ENCODE measurements at regions of chr4 and their contacts with region 1.

Region 1: GRCh38 chr4:25144870-25145481 is 15.3 kb downstream of the SEPSECS start:
- DNase-seq: no peak
- H3K4me3 ChIP-seq: no peak overlapping the region
- CTCF ChIP-seq: peak; percentile 33

Region 2: GRCh38 chr4:24488399-24489164 is 656.4 kb before region 1 on chr4:
- CTCF ChIA-PET with region 1: interaction called, 14 read pairs
- POLR2A ChIA-PET with region 1: no interaction called
- DNase-seq: no peak
- H3K4me3 ChIP-seq: no peak overlapping the region
- CTCF ChIP-seq: peak; percentile 86

Region 3: DNA sequence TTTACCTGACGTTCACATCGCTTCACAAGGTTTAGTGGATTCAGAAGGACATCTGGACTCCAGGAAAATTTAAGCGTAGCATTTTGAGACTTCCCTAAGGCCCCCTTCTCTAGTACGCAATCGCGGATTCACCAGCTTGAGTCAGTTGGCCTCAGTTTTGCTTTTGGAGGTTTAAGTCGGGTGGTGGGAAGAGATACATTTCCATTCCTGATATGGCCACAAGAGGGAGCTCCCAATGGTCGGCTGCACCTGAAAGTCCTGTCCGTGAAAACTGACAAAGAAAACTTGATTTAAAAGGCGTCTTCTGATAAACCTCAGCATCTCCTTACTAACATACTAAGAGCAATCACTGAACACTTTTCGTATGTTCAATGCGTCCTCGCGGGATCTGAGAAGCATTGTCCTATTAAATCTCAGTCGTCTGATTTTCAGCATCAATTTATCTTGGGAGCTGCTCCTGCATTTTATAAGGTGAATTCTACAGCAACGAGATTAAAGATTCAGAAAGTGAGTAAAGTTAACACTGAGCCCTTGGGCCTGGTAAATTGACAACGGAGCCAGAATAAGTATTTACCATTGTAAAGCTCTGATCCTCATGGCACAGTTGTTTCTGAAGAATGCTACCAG is 164.8 kb before region 1 on chr4:
- CTCF ChIA-PET with region 1: interaction called, 28 read pairs
- POLR2A ChIA-PET with region 1: no interaction called
- DNase-seq: peak; percentile 24
- H3K4me3 ChIP-seq: peak overlapping the region; percentile 35
- CTCF ChIP-seq: peak; percentile 70

Region 4: DNA sequence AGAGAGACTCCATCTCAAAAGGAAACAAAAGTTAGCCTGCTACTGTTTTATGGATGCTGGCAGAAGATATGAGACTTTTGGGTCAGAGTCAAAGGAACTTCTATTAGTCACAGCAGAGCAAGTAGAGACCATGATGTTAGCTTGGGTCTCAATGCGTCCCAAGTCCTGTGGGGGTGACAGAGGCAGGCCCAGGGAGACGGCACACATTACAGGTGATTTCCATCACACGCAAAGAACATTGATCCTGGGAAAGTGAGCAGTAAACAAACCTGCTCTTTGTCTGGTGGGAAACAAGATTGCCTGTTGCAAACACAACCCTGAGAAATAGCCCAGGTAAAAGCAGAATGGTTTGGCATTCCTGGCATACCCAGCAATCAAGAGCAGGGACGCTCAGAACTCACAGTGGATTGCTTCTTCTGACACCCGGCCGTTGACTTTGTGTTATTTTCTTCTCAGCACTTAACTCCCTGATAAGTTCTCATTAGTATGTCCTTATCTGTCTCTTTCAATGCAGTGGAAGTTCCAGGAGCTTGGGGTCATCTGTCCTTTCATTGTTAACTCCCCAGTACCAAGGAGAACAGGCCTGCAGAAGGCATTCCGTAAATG is 63.0 kb before region 1 on chr4:
- CTCF ChIA-PET with region 1: no interaction called
- POLR2A ChIA-PET with region 1: no interaction called
- DNase-seq: no peak
- H3K4me3 ChIP-seq: no peak overlapping the region
- CTCF ChIP-seq: no peak

Region 5: DNA sequence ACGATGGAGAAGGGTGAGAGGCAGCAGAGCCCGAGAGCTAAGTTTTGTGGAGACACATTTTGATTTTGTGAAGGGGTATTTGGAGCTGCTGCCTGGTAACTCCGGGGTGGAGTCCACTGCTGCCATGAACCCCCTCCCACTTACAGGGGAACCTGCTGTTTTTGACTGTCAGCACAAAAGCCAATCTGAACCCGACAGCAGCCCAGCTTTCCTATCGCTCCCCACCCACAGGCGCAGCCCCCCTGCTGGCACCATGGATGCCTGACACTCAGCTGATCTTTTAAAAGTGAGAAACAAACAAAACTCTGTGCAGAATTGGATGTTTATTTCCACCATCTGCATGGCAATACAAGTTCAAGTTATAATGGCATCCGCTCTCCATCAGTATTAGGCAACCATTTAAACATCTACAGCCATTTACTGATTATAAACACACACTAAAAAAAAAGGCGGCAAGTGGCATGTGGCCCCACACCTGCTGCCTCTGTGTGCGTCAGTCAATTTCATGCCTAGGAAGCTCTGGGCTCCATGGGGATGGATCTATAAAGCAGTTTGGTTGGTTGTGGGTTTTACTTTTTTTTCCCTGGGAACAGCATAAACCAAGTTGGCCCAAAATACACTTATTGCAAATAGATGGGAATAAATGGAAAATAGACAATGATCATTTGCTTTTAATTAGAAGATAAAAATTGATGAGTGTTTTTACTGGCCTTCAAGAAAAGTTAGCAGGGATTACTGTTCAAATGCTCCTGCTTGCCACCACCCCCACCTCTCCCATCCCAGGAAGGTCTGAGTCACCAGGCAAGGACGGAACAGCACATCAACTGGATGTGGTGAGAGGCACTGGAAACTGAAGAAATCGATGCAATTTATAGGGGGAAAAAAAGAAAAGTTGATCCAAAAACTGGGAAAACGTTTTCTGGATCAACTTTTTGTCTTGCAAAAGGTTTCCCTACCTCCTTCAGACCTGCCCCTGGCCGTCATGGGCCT is 30.8 kb before region 1 on chr4:
- CTCF ChIA-PET with region 1: interaction called, 13 read pairs
- POLR2A ChIA-PET with region 1: no interaction called
- DNase-seq: peak; percentile 34
- H3K4me3 ChIP-seq: no peak overlapping the region
- CTCF ChIP-seq: no peak

Region 6: DNA sequence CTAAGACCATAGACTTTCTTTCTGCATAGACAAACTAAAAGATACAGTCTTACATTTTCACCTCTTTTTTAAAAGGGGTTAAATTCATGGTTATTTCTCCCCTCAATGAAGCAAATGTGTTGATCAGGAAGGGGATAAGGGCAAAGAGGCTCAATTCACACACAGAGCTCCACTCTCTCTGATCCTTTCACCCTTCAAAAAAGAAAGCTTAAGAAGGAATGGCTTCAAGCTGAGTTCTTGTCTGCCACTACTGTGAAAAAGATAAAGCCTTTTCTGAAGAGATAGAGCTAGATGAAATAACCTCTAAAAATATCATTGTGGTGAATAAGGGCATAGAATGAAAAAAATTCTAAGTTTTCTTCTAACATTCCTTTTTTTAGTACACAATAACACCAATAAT is 13.1 kb before region 1 on chr4:
- CTCF ChIA-PET with region 1: interaction called, 28 read pairs
- POLR2A ChIA-PET with region 1: no interaction called
- DNase-seq: no peak
- H3K4me3 ChIP-seq: no peak overlapping the region
- CTCF ChIP-seq: no peak

Region 7: GRCh38 chr4:25159884-25160713 is 15.1 kb after region 1 on chr4 and contains the start of gene SEPSECS:
- CTCF ChIA-PET with region 1: interaction called, 13 read pairs
- POLR2A ChIA-PET with region 1: no interaction called
- DNase-seq: peak; percentile 70
- H3K4me3 ChIP-seq: peak within 1 kb of the TSS; percentile 84
- CTCF ChIP-seq: no peak

Region 8: GRCh38 chr4:25667931-25668557 is 523.1 kb after region 1 on chr4:
- CTCF ChIA-PET with region 1: no interaction called
- POLR2A ChIA-PET with region 1: no interaction called
- DNase-seq: no peak
- H3K4me3 ChIP-seq: no peak overlapping the region
- CTCF ChIP-seq: no peak

Region 9: DNA sequence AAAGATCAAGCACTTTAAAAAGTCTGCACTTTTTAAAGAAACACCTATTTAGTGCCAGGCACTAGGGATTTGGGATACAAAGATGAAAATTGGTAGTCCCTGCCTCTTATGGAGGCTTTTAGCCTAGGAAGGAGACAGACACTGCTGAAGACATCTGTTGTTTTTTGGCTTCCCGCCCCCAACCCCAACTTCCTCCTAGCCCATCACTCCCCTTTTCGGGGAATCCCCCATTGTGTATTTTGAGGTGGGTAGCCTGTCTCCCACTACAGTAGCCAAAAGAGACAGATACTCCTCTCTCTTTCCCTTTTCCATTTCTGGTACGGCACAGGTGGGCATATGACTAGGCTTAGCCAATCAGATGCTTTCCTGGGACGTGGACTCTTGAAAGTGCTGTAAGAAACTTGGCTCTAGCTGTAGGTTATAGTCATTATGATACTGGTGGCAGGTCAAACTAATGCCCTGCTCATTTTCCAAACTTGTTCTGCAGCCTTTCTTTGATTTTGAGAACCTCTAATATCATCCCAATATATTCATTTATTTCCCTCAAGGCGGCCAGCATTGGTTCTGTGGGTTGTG is 981.3 kb after region 1 on chr4:
- CTCF ChIA-PET with region 1: no interaction called
- POLR2A ChIA-PET with region 1: no interaction called
- DNase-seq: no peak
- H3K4me3 ChIP-seq: no peak overlapping the region
- CTCF ChIP-seq: no peak